ENCODE measurements at regions of chrX and their contacts with region 1.

Region 1: DNA sequence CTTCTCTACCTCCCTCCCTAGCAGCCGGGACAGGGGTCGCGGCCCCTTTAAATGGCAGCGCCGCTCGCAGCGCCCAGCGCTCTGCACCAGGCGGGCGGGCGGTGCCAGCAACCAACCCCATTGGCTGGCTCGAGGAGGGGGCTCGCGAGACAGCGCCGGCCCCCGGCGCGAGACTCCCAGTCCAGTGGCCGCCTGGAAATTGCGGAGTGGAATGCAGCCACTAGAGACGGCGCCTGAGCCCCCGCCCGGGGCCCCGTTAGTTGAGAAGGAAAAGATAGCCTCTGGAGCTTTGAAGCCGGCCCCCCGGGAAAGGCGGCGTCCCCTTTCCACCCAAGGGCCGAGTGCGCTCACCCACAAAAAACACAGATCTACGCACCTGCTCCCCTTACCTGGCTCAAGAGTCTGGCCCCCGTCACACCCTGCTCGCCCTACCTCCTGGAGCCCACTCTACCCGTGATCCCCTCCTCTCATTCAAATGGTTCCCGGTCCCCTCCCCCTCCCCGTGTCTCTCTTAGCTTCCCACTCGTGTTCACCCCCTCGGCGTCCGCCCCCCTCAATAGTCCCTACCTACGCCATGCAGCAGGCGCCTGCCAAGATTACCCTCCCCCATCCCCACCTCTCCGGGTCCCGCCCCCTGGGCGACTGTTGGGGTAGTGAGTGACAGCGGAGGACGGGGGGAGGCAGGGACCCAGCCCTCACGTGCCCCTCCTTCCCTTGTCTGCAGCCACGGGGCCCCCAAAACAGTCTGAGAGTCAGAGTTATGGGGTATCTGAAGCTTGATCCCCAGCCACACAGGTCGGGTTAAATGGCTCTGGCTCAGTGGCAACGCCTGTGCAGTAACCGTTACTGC is at the start of gene ZMYM3:
- DNase-seq: peak; percentile 85 to 92 (median 90)
- ATAC-seq: peak; percentile 93 to 96 (median 94)
- H3K4me3 ChIP-seq: peak within 1 kb of the TSS; percentile 53 to 98 (median 66)
- H3K27ac ChIP-seq: peak within 1 kb of the TSS; percentile 24 to 93 (median 86)
- H3K4me1 ChIP-seq: peaks cover 0 to 14% (median 8%) of the 10 kb centered on the region in 12 donors
- H3K27me3 ChIP-seq: no peaks in the 10 kb centered on the region
- CTCF ChIP-seq: no peak
- POLR2A ChIP-seq: peak in 1 of 2 donors; percentile 51
- total RNA-seq, gene ZMYM3: 11.3 to 22.9 (median 15.2) TPM

Region 2: DNA sequence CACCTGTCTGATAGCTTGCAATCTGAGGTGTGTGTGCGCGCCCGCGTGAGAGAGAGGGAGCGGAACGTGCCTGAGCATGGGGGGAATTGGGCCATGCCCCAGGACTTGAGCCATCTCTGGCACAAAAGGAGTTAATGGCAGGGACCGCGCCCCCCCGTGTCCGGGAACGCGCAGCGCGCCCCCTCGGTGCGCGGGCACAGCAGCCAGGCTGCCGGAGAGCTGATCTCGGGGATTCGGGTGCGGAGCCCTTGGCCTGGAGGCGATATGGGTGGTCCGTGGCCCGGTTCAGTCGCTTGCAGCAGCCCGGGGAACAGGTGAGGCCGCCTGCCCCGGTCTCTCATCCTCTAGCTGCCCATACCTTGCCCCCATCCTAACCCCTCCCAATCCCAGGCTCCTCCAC is 109.7 kb before region 1 on chrX and contains the start of gene NLGN3:
- intact Hi-C with region 1: loop called in 1 of 10 experiments (anchors 10 kb)
- DNase-seq: no peak
- ATAC-seq: no peak
- H3K4me3 ChIP-seq: peak within 1 kb of the TSS in 9 of 12 donors; percentile 16 to 48 (median 28)
- H3K27ac ChIP-seq: no peak within 1 kb of the TSS
- H3K4me1 ChIP-seq: peaks cover 0 to 12% (median 2%) of the 10 kb centered on the region in 12 donors
- H3K27me3 ChIP-seq: no peaks in the 10 kb centered on the region
- CTCF ChIP-seq: no peak
- POLR2A ChIP-seq: no peak
- total RNA-seq, gene NLGN3: 0.14 to 1.3 (median 0.52) TPM

Region 3: GRCh38 chrX:71171110-71171801 is 83.1 kb before region 1 on chrX:
- intact Hi-C with region 1: no loop called
- DNase-seq: no peak
- ATAC-seq: peak in 2 of 4 donors; percentile 38 to 45
- H3K4me3 ChIP-seq: no peak overlapping the region
- H3K27ac ChIP-seq: no peak overlapping the region
- H3K4me1 ChIP-seq: no peaks in the 10 kb centered on the region
- H3K27me3 ChIP-seq: peaks cover 0 to 6% (median 0%) of the 10 kb centered on the region in 9 donors
- CTCF ChIP-seq: no peak
- POLR2A ChIP-seq: no peak

Region 4: GRCh38 chrX:71227370-71228062 is 26.8 kb before region 1 on chrX:
- intact Hi-C with region 1: no loop called
- DNase-seq: no peak
- ATAC-seq: no peak
- H3K4me3 ChIP-seq: no peak overlapping the region
- H3K27ac ChIP-seq: no peak overlapping the region
- H3K4me1 ChIP-seq: no peaks in the 10 kb centered on the region
- H3K27me3 ChIP-seq: peaks cover 0 to 3% (median 0%) of the 10 kb centered on the region in 9 donors
- CTCF ChIP-seq: no peak
- POLR2A ChIP-seq: no peak

Region 5: GRCh38 chrX:71283403-71284143 is 29.3 kb after region 1 on chrX and contains the start of gene NONO:
- intact Hi-C with region 1: loop called in 2 of 10 experiments (anchors 2 kb)
- DNase-seq: peak; percentile 82 to 93 (median 88)
- ATAC-seq: peak; percentile 93 to 97 (median 95)
- H3K4me3 ChIP-seq: peak within 1 kb of the TSS; percentile 42 to 83 (median 70)
- H3K27ac ChIP-seq: peak within 1 kb of the TSS; percentile 71 to 95 (median 90)
- H3K4me1 ChIP-seq: peaks cover 0 to 25% (median 19%) of the 10 kb centered on the region in 12 donors
- H3K27me3 ChIP-seq: no peaks in the 10 kb centered on the region
- CTCF ChIP-seq: peak in 4 of 12 donors; percentile 6 to 44 (median 22)
- POLR2A ChIP-seq: no peak
- total RNA-seq, gene NONO: 97.0 to 177 (median 113) TPM

Region 6: DNA sequence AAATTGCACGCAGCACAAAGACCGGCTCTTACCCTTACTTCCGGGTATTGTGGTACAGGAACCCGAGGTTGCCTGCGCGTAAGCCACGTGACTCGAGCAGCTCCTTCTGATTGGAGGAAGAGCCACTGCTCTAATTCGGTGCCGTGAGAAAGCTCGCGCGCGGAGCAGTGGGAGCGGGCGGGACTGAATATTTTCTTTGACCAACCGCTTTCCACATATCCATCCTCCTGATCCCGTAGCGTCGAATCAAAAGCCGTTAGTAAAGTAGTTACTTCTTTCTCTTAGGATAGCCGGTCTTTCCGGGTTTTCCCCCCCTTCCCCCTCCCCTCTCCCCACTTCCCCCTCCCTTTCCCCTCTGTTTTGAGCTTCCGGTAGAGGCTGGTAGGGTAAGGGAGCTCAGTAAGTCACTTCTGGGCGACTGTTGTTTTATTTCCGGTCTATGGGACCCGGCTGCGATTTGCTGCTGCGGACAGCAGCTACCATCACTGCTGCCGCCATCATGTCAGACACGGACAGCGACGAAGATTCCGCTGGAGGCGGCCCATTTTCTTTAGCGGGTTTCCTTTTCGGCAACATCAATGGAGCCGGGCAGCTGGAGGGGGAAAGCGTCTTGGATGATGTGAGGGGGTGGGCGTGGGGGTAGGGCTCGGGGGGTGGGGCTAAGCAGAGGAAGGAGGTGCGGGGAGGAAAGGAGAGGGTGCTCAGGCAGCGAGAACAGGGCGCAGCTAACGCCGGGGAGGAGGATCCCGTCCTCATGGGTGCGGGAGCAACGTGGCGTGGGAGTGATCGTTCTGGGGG is 111.8 kb after region 1 on chrX and contains the start of gene TAF1:
- intact Hi-C with region 1: loop called in 4 of 10 experiments (anchors 10 kb)
- DNase-seq: peak; percentile 93 to 96 (median 94)
- ATAC-seq: peak; percentile 95 to 98 (median 97)
- H3K4me3 ChIP-seq: peak within 1 kb of the TSS; percentile 52 to 93 (median 72)
- H3K27ac ChIP-seq: peak within 1 kb of the TSS; percentile 77 to 96 (median 92)
- H3K4me1 ChIP-seq: peaks cover 0 to 19% (median 10%) of the 10 kb centered on the region in 12 donors
- H3K27me3 ChIP-seq: no peaks in the 10 kb centered on the region
- CTCF ChIP-seq: no peak
- POLR2A ChIP-seq: peak in 1 of 2 donors; percentile 54
- total RNA-seq, gene TAF1: 14.3 to 27.8 (median 20.8) TPM